PC-9 (cell line): ENCODE measurements at regions of chr5 and their contacts with region 1.

Region 1: DNA sequence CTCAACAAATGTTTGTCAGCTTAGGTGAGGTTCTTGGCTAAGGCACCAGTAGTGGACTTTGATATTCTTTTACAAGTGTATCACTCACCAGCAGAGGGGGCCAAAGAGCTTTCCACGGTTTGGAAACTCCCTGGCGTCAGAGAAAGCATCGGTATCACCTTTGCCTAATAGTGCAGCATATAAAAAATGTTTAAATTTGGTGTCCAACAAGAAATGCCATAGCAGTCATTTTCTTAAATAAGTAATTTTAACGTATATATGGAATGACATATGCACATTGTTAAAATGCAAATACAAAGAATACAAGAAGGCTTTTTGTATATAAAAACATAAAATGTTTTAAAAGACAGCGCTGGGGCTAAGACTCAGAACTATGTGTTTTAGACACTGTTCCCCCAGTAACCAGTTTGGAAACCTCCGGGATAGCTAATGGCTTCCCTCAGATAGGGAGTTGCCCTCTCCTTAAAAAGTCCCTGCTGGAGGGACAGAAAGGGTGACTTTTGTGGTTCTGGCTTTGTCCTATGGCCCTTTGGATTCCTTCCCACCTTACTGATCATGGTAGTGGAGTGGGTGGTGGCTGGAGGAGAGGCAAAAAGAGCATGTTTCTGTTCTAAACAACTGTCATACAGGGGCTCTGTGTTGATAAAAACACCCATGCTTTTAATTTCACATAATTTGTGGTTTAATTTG is 124.6 kb downstream of the GPBP1 start:
- DNase-seq: peak; percentile 74 to 80
- H3K4me3 ChIP-seq: no peak overlapping the region
- H3K27ac ChIP-seq: peak overlapping the region; percentile 48
- H3K4me1 ChIP-seq: peaks cover 11% of the 10 kb centered on the region; the same call in 1 of the 2 replicates
- H3K27me3 ChIP-seq: no peaks in the 10 kb centered on the region
- CTCF ChIP-seq: peak; percentile 86

Region 2: DNA sequence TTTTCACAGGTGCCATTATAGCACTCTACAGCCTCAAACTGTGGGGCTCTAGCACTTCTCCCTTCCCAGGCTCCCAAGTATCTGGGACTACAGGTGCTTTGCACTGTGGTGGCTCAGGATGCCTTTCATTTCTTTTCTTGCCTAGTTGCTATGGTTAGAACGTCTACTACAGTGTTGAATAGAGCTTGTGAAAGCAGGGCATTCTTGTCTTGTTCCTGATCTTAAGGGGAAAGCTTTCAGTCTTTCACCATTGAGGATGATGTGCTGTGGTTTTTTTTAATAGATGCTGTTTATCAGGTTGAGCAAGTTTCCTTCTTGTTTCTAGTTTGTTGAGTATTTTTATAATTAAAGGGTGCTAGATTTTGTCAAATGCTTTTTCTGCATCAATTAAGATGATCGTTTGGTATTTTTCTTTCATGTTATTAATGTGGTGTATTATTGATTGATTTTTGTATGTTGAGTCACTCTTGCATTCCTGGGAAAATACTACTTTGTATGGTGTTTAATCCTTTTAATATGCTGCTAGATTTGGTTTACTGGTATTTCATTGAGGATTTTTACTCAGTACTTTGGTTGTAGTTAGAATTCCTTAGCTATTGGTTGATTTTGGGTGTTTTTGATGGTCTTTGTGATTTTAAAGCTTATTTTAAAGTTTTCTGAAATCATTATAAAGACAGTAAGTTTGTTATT is 88.9 kb before region 1 on chr5:
- CTCF ChIA-PET with region 1: no interaction called
- POLR2A ChIA-PET with region 1: no interaction called
- intact Hi-C with region 1: no loop called
- DNase-seq: peak in 1 of 2 experiments; percentile 89
- H3K4me3 ChIP-seq: no peak overlapping the region
- H3K27ac ChIP-seq: peak overlapping the region; percentile 50
- H3K4me1 ChIP-seq: peaks cover 18% of the 10 kb centered on the region
- H3K27me3 ChIP-seq: no peaks in the 10 kb centered on the region
- CTCF ChIP-seq: no peak

Region 3: DNA sequence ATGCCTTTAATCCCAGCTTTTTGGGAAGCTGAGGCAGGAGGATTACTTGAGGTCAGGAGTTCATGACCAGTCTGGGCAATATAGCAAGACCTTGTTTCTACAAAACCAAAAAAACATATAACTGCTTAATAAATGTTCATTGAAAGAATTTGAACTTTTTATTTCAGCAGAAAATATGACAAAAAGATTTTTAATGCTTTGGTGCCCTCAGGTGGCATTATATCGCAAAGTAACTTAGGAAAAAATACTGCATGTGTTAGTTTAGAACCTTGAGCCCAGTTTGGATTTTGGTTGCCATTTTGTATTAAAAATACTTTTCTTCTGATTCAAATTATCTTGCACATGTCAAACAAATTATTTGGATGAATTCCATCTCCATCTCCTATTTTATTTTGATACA is 21.4 kb before region 1 on chr5:
- CTCF ChIA-PET with region 1: interaction called, 14 read pairs
- POLR2A ChIA-PET with region 1: no interaction called
- intact Hi-C with region 1: no loop called
- DNase-seq: no peak
- H3K4me3 ChIP-seq: no peak overlapping the region
- H3K27ac ChIP-seq: no peak overlapping the region
- H3K4me1 ChIP-seq: no peaks in the 10 kb centered on the region
- H3K27me3 ChIP-seq: no peaks in the 10 kb centered on the region
- CTCF ChIP-seq: peak; percentile 65

Region 4: GRCh38 chr5:57358796-57359592 is 60.6 kb after region 1 on chr5:
- CTCF ChIA-PET with region 1: no interaction called
- POLR2A ChIA-PET with region 1: no interaction called
- intact Hi-C with region 1: no loop called
- DNase-seq: no peak
- H3K4me3 ChIP-seq: no peak overlapping the region
- H3K27ac ChIP-seq: no peak overlapping the region
- H3K4me1 ChIP-seq: peaks cover 4% of the 10 kb centered on the region
- H3K27me3 ChIP-seq: no peaks in the 10 kb centered on the region
- CTCF ChIP-seq: no peak

Region 5: DNA sequence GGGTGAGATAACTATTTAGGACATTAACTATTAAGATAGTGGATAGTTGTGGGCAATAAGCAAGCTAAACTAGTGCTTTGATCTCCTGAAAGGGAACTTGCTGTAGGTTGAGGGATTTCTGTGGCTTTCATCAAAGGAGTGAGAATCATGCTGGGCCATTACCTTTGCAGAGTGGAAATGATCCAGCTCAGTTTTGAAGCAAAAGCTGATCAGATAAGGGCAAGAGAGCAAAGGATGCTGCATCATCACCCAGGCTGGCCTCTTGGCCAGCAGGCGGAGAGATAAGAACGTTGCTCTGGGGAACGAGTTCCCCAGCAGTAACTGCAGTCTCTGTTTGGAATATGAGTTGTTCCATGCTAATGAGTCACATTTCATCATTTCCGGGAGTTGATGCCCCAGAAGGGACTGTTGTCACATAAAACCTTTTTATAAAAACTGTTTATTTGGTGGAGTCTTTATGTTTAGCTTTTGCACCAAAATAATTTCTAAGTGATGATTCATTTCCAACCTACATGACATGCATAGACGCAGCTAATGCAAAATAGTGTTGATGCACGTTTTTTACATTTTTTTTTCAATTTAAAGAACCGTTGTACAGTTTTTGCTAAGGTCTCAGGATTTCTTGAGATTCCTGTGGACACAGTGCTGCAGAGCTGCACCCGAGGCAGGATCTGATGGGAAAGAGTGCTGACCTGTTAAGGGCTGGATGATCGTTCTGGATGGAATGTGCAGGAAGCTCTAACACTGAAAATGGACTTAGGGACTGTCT is 84.8 kb after region 1 on chr5:
- CTCF ChIA-PET with region 1: no interaction called
- POLR2A ChIA-PET with region 1: no interaction called
- intact Hi-C with region 1: loop called (anchors 1 kb)
- DNase-seq: peak; percentile 62 to 89
- H3K4me3 ChIP-seq: no peak overlapping the region; the same call in 1 of the 2 replicates
- H3K27ac ChIP-seq: peak overlapping the region; percentile 84
- H3K4me1 ChIP-seq: peaks cover 30% of the 10 kb centered on the region
- H3K27me3 ChIP-seq: no peaks in the 10 kb centered on the region
- CTCF ChIP-seq: no peak

Region 6: GRCh38 chr5:57499262-57500050 is 201.0 kb after region 1 on chr5:
- CTCF ChIA-PET with region 1: no interaction called
- POLR2A ChIA-PET with region 1: interaction called, 4 read pairs
- intact Hi-C with region 1: loop called (anchors 1 kb)
- DNase-seq: peak; percentile 50 to 84
- H3K4me3 ChIP-seq: peak overlapping the region; percentile 18; the same call in 1 of the 2 replicates
- H3K27ac ChIP-seq: peak overlapping the region; percentile 74
- H3K4me1 ChIP-seq: peaks cover 34% of the 10 kb centered on the region
- H3K27me3 ChIP-seq: no peaks in the 10 kb centered on the region
- CTCF ChIP-seq: peak; percentile 84

Region 7: DNA sequence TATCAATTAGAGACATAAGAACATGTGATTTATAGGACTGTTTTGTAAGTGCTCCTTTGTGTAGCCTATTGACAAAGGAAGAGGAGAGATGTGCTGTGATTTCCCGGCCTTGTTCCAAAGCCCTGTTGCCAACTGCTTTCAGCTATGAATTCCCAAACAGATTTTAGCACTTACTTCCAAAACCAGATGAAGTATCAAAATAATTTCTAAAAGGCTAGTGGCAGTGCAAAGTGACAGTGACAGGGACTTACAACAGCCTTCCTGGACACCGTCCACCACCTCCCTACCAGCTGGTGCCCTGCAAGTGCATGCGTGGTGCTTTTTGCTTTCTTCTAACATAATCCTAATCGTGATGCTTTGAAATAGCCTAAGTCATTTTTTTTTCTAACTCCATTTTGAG is 438.3 kb after region 1 on chr5:
- CTCF ChIA-PET with region 1: no interaction called
- POLR2A ChIA-PET with region 1: interaction called, 3 read pairs
- intact Hi-C with region 1: loop called (anchors 1 kb)
- DNase-seq: no peak
- H3K4me3 ChIP-seq: no peak overlapping the region
- H3K27ac ChIP-seq: peak overlapping the region; percentile 92
- H3K4me1 ChIP-seq: peaks cover 49% of the 10 kb centered on the region
- H3K27me3 ChIP-seq: no peaks in the 10 kb centered on the region
- CTCF ChIP-seq: no peak

Region 8: GRCh38 chr5:57825031-57825683 is 526.7 kb after region 1 on chr5:
- CTCF ChIA-PET with region 1: no interaction called
- POLR2A ChIA-PET with region 1: no interaction called
- intact Hi-C with region 1: loop called (anchors 2 kb)
- DNase-seq: peak; percentile 63 to 99
- H3K4me3 ChIP-seq: no peak overlapping the region
- H3K27ac ChIP-seq: peak overlapping the region; percentile 97
- H3K4me1 ChIP-seq: peaks cover 39% of the 10 kb centered on the region
- H3K27me3 ChIP-seq: no peaks in the 10 kb centered on the region
- CTCF ChIP-seq: no peak

Region 9: GRCh38 chr5:58460732-58461286 is 1162.4 kb after region 1 on chr5:
- CTCF ChIA-PET with region 1: no interaction called
- POLR2A ChIA-PET with region 1: no interaction called
- intact Hi-C with region 1: loop called (anchors 1 kb)
- DNase-seq: peak; percentile 79 to 91
- H3K4me3 ChIP-seq: peak overlapping the region; percentile 90
- H3K27ac ChIP-seq: peak overlapping the region; percentile 96
- H3K4me1 ChIP-seq: peaks cover 14% of the 10 kb centered on the region
- H3K27me3 ChIP-seq: no peaks in the 10 kb centered on the region
- CTCF ChIP-seq: peak; percentile 83